H1 (cell line): ENCODE measurements at regions of chr1 and their contacts with region 1.

Region 1: GRCh38 chr1:151399890-151400495 is 620 bp downstream of the PSMB4 start:
- DNase-seq: no peak
- H3K4me3 ChIP-seq: peak overlapping the region; percentile 88 to 99 (median 96)
- H3K27ac ChIP-seq: peak overlapping the region; percentile 85
- H3K4me1 ChIP-seq: peaks cover 0 to 4% (median under 1%) of the 10 kb centered on the region in 4 experiments; a peak in 3 of 7 replicates
- H3K27me3 ChIP-seq: no peaks in the 10 kb centered on the region
- CTCF ChIP-seq: no peak
- EP300 ChIP-seq: no peak
- POLR2A ChIP-seq: no peak
- RAD21 ChIP-seq: no peak

Region 2: DNA sequence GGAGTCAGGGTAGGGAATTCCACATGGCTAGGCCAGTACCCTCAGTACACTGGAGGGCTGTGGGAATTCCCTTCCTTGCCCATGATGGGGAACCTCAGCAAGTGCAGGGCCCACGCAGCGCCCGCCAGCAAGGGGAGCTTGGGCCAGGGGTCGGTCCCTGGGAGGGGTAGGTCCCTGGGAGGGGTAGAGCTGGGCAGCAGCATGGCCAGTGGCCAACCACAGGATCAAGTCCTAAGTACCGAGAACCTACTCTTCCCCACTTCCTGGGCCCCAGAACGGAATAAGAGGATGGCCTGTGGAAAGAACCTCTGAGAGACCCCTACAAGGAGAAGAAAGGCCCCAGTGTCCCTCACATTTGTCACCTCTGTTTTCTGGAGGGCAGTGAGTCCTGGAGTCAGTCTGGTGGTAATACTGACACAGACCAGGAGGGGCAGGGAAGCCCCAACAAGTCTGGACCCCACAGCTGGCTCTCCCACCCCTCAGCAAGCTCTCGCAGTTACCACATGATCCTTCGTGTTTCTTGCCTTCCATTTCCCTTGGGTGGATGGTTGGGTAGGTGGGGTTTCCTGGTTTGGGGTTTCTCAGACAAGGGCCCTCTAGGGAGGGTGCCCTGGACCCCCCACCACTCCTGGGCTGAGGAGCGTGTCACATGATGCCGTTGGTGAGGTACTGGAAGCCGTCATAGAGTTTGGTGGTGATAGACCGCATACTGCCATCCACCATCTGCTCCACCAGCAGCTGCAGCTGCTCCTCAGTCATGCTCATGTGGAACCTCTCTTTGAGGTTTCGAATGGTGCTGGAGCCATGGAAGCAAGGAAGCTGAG is 107.6 kb before region 1 on chr1:
- CTCF ChIA-PET with region 1: interaction called, 6 read pairs
- POLR2A ChIA-PET with region 1: interaction called, 11 read pairs
- DNase-seq: no peak
- H3K4me3 ChIP-seq: no peak overlapping the region
- H3K27ac ChIP-seq: no peak overlapping the region
- H3K4me1 ChIP-seq: peaks cover 6 to 21% (median 15%) of the 10 kb centered on the region in 4 experiments
- H3K27me3 ChIP-seq: no peaks in the 10 kb centered on the region
- CTCF ChIP-seq: peak; percentile 23 to 38 (median 28); a peak in 3 of 4 replicates
- EP300 ChIP-seq: no peak
- POLR2A ChIP-seq: peak; percentile 51 to 53
- RAD21 ChIP-seq: peak; percentile 6 to 27; a peak in 2 of 4 replicates

Region 3: DNA sequence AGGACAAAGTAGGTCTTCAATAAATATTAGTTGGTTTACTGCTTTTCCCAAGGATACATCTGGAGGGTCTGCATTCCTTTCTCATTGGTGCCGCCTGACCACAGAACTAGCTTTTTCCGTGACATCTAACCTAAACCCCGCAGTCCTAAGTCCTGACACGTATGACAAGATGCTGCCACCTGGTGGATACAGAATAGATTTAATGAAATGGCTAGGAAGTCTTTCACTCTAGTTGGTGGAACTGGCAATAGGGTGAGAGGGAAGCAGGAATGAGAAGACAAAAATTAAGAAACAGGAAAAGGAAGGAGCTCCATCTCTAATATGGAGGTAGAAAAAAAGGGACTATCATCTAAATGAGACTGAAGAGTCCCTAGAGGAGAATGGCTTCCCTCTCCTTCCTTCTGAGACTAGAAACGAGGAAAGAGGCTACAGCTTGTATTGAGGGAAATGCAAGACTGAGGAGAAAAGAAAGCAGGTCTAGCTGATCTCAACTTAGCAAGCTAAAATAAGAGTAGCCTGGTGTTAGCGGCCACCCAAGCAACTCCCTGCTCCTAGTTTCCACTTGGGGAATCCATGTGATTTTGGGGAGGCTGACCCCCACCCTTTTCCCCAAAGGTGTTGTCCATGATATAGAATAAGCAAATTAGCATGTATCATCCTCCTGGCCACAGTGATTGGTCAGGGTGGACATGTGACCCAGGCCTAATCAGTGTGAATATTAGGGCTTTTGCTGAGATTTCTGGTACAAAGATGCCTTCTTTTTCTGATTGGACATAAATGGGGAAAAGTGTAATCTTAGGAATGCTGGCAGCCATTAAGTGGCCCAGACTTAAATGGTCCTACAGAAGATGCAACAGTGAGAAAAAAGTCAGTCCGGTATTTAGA is 58.9 kb before region 1 on chr1:
- CTCF ChIA-PET with region 1: interaction called, 7 read pairs
- POLR2A ChIA-PET with region 1: interaction called, 25 read pairs
- DNase-seq: no peak
- H3K4me3 ChIP-seq: no peak overlapping the region
- H3K27ac ChIP-seq: no peak overlapping the region
- H3K4me1 ChIP-seq: peaks cover 3 to 5% (median 4%) of the 10 kb centered on the region in 4 experiments; a peak in 5 of 7 replicates
- H3K27me3 ChIP-seq: no peaks in the 10 kb centered on the region
- CTCF ChIP-seq: peak; percentile 18 to 78 (median 74)
- EP300 ChIP-seq: no peak
- POLR2A ChIP-seq: peak; percentile 13 to 22; a peak in 2 of 3 replicates
- RAD21 ChIP-seq: peak; percentile 84

Region 4: GRCh38 chr1:151372061-151372934 is 27.7 kb before region 1 on chr1 and contains the start of gene SELENBP1:
- CTCF ChIA-PET with region 1: interaction called, 4 read pairs
- POLR2A ChIA-PET with region 1: interaction called, 14 read pairs
- DNase-seq: peak; percentile 19 to 76
- H3K4me3 ChIP-seq: peak within 1 kb of the TSS; percentile 11 to 55 (median 31); a peak in 7 of 8 replicates
- H3K27ac ChIP-seq: no peak within 1 kb of the TSS
- H3K4me1 ChIP-seq: peaks cover 0 to 11% (median 8%) of the 10 kb centered on the region in 4 experiments; a peak in 6 of 7 replicates
- H3K27me3 ChIP-seq: no peaks in the 10 kb centered on the region
- CTCF ChIP-seq: no peak
- EP300 ChIP-seq: no peak
- POLR2A ChIP-seq: peak in 1 of 2 experiments; percentile 73; a peak in 2 of 3 replicates
- RAD21 ChIP-seq: no peak
- total RNA-seq, gene SELENBP1: 15.3 and 20.0 TPM in 2 replicates

Region 5: GRCh38 chr1:151384584-151384983 is 15.4 kb before region 1 on chr1:
- CTCF ChIA-PET with region 1: interaction called, 14 read pairs
- POLR2A ChIA-PET with region 1: interaction called, 10 read pairs
- DNase-seq: no peak
- H3K4me3 ChIP-seq: no peak overlapping the region
- H3K27ac ChIP-seq: no peak overlapping the region
- H3K4me1 ChIP-seq: no peaks in the 10 kb centered on the region
- H3K27me3 ChIP-seq: no peaks in the 10 kb centered on the region
- CTCF ChIP-seq: no peak
- EP300 ChIP-seq: no peak
- POLR2A ChIP-seq: no peak
- RAD21 ChIP-seq: no peak

Region 6: DNA sequence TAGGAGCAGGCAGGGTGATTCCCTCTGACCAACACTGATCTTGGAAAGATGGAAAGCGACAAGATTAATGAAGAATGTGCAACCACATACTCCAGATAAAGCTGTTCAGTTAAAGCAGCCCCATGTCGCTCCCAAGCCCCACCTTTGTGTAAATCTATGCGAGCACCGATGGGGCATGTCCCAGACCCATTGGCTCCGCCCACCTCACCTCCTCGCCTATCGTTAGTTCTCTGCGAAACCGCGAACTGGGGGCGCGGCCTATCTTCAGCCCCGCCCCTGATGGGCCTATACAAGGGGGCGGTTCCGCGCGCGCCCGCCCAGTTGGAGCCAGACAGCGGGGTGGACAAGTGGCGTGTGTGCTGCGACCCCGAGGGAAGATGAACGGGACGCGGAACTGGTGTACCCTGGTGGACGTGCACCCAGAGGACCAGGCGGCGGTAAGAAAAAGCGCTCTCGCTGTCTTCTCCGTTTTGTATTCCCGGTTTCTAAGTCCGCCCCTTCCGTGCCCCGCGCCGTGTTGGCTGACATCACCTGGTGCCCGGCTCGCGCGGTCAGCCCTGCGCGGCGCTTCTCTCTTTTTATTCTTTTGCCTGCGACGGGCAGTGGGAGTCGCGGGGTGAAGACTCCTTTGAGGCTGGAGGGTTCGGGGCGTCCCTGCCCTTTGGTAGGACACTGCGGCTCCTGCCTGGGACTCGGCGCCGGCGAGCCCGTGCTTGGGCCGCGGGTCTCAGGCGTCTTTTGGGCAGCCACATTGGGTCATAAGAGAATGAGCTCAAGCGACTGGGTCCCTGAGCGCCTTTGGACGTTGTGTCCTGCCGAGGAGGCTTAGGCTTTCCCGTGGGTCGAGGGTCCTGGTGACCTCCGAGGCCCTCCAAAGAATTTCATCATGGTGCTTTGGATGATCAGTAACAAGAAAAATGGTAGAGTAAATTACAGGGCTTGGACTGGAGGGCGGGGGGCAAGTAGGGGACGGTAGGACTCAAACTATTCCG is 140.3 kb after region 1 on chr1 and contains the start of gene TUFT1:
- CTCF ChIA-PET with region 1: no interaction called
- POLR2A ChIA-PET with region 1: interaction called, 16 read pairs
- DNase-seq: peak; percentile 81 to 96
- H3K4me3 ChIP-seq: peak within 1 kb of the TSS; percentile 65 to 95 (median 82)
- H3K27ac ChIP-seq: peak within 1 kb of the TSS; percentile 78
- H3K4me1 ChIP-seq: peaks cover 0 to 7% (median 6%) of the 10 kb centered on the region in 4 experiments; a peak in 6 of 7 replicates
- H3K27me3 ChIP-seq: no peaks in the 10 kb centered on the region
- CTCF ChIP-seq: no peak
- EP300 ChIP-seq: no peak
- POLR2A ChIP-seq: peak; percentile 92 to 98
- RAD21 ChIP-seq: no peak
- total RNA-seq, gene TUFT1: 10.1 and 10.4 TPM in 2 replicates